Transverse colon (tissue), 4 donors: ENCODE measurements at regions of chr1 and their contacts with region 1.

Region 1: GRCh38 chr1:66035616-66036245 is 243.0 kb downstream of the PDE4B start:
- DNase-seq: no peak
- H3K4me3 ChIP-seq: no peak overlapping the region
- H3K27ac ChIP-seq: no peak overlapping the region
- H3K4me1 ChIP-seq: no peaks in the 10 kb centered on the region
- H3K27me3 ChIP-seq: no peaks in the 10 kb centered on the region
- CTCF ChIP-seq: no peak
- EP300 ChIP-seq: no peak
- POLR2A ChIP-seq: no peak

Region 2: GRCh38 chr1:66000033-66000637 is 35.6 kb before region 1 on chr1:
- in situ Hi-C with region 1: no loop called
- intact Hi-C with region 1: loop called (anchors 2 kb)
- DNase-seq: no peak
- H3K4me3 ChIP-seq: no peak overlapping the region
- H3K27ac ChIP-seq: no peak overlapping the region
- H3K4me1 ChIP-seq: no peaks in the 10 kb centered on the region
- H3K27me3 ChIP-seq: no peaks in the 10 kb centered on the region
- CTCF ChIP-seq: no peak
- EP300 ChIP-seq: no peak
- POLR2A ChIP-seq: no peak